ENCODE measurements at regions of chr17 and their contacts with region 1.

Region 1: DNA sequence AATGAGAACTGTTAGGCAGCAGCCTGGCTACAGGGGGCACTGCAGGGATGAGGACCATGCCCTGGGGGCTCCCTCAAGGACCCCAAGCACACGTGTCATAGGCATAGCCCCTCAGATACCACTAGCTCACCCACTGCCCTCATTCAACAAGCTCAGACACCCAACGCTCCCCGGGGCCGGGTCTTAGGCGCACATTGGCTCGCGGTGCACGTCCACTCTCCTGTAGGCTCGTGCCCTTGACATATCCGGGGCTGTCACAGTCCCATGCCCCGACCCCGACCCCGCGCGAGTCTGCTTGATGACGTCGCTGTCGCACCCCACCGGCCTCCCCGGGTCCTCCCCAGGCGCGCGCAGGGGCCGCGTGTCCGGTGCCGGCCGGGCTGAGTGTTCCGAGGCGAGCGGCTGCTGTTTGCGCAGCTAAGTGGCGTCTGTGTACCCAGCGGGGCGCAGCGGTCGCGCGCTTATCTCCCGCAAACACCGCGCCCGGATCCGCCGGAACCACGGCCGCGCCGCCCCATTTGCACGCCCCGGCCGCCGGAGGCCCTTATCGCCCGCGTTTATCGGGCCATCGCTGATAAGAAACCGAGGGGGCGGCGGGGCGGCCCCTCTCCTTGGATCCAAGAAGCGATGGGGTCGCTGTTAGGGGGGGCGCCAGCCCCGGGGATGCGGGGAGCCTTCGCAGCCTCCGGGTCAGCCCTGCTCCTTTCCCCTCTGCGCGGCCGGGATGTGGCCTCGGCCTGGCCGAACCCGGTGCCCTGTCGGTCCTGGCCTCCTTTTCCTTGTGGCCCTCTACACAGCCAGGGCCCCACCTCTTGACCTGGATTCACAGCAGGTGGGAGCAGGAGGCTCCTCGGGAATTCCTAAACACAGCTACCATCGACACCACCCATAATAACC is 20.7 kb upstream of the NAGS start:
- DNase-seq: peak in 1 of 2 experiments; percentile 34
- ATAC-seq: peak; percentile 67 to 77
- H3K4me3 ChIP-seq: peak overlapping the region; percentile 59
- H3K27ac ChIP-seq: peak overlapping the region; percentile 58 to 81; a peak in 5 of 6 replicates
- H3K4me1 ChIP-seq: 0 out of 3 replicates have a peak, but pooled peaks cover 8% of the 10 kb centered on the region
- CTCF ChIP-seq: peak; percentile 53
- EP300 ChIP-seq: no peak
- POLR2A ChIP-seq: no peak
- RAD21 ChIP-seq: no peak

Region 2: DNA sequence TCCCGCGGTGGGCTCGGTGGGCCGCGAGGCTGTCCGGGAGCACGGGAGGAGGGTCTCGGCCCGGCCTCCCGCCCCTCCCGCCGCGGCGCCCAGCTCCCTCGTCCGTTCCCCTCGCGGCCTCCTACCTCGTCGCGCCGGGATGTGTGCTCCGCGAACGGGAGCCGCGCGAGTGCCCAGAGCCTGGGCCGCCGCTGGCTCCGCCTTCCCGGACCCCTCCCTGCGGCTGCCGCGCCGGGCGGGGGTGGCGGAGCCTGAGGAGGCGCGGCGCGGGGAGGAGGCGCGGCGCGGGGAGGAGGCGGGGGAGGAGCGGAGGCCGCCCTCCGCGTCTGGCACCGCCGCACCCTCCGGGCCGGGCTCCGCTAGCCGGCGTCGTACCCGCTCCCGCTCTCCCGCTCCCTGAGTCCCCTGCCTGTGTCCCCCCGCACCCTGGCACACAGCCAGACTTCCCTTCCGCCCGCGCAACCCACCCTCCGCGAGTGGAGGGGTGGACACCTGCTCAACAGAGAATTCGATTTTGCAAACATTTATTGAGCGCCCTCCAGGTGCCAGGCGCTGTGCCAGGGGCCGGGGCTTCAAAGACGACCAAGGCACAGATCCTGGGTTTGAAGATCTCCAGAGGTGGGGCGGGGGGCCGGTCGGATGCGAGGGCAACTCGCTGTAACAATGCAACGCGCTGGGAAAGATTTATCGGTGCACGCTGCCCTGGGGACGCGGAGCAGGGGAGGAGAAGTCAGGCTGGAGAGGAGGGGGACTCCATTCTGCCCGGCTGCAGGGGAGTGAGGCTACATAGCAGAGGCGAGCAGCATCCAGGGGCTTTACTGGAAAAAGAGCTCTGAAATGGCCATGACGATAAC is 150.6 kb before region 1 on chr17 and contains the start of gene MPP3:
- CTCF ChIA-PET with region 1: no interaction called
- POLR2A ChIA-PET with region 1: no interaction called
- DNase-seq: peak; percentile 78 to 94
- ATAC-seq: peak; percentile 84 to 91
- H3K4me3 ChIP-seq: peak within 1 kb of the TSS; percentile 80
- H3K27ac ChIP-seq: peak within 1 kb of the TSS; percentile 91 to 98
- H3K4me1 ChIP-seq: peaks cover 24% of the 10 kb centered on the region
- CTCF ChIP-seq: no peak
- EP300 ChIP-seq: no peak
- POLR2A ChIP-seq: peak; percentile 72
- RAD21 ChIP-seq: no peak
- polyA plus RNA-seq, gene MPP3: 15.5 and 20.3 TPM in 2 replicates

Region 3: GRCh38 chr17:43857942-43858600 is 125.7 kb before region 1 on chr17:
- CTCF ChIA-PET with region 1: no interaction called
- POLR2A ChIA-PET with region 1: no interaction called
- DNase-seq: no peak
- ATAC-seq: no peak
- H3K4me3 ChIP-seq: no peak overlapping the region
- H3K27ac ChIP-seq: no peak overlapping the region
- H3K4me1 ChIP-seq: peaks cover 5% of the 10 kb centered on the region; the same call in 1 of the 3 replicates
- CTCF ChIP-seq: no peak
- EP300 ChIP-seq: no peak
- POLR2A ChIP-seq: no peak
- RAD21 ChIP-seq: no peak

Region 4: DNA sequence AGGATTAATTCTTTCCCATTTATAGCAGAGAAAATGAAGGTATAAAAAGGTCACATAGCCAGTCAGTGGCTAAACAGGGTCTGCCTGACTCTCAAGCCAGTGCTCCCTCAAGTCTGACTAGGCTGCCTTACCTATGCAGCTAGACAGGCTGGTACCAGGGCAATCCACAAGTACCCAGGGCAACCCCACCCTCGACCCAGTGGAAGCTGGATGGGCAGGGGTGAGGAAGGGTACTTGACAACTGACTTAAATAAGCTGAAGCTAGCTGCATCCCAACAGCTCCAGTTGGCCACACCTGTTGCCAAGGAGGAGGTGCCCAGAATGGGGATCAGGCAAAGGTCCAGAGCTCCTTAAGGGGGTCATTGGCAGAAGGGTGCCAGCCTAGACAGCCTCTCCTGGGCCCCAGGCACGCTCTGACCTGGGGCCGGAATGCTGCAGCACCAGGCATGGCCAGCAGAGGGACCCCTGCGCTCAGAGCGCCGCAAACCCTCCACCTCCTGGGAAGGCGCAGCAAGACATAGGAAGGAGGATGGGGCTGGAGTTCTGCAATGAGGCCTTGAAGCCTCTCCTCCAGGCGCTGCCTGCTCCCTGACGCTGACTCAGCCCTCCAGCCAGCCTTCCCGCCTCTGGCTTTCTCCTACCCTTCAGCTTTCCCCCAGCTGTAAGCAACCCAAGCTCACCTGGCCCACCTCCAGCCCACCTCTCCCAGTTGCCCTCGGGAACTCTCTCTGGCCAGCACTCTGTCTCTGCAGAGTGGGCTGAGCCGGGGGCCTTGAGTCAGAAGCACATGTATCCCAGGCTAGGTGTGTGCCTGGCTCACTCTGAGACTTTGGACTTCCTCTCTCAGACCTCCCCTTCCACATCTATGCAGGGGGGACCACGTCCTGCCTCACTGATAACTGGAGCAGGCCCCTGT is 105.2 kb before region 1 on chr17:
- CTCF ChIA-PET with region 1: interaction called, 240 read pairs
- POLR2A ChIA-PET with region 1: no interaction called
- DNase-seq: peak; percentile 87 to 98
- ATAC-seq: peak; percentile 83 to 94
- H3K4me3 ChIP-seq: no peak overlapping the region
- H3K27ac ChIP-seq: peak overlapping the region; percentile 33 to 54; a peak in 4 of 6 replicates
- H3K4me1 ChIP-seq: peaks cover 5% of the 10 kb centered on the region
- CTCF ChIP-seq: peak; percentile 96
- EP300 ChIP-seq: no peak
- POLR2A ChIP-seq: no peak
- RAD21 ChIP-seq: peak; percentile 85 to 88

Region 5: DNA sequence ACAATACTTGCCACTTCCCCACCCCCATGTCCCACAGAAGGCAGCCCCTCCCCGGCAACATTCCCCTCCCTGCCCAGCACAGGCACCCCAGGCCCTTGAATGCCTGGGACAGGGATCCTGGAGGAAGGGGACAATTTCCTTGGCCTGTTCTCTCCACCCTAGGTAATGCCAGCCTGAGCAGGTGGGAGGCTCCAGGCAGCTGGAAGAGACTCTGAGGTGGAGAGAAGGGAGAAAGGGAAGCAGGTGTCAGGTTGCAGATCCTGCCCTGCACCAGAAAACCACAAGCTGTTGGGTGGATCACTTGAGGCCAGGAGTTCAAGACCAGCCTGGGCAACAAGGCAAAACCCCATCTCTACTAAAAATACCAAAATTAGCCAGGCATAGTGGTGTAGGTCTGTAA is 85.3 kb before region 1 on chr17:
- CTCF ChIA-PET with region 1: no interaction called
- POLR2A ChIA-PET with region 1: no interaction called
- DNase-seq: no peak
- ATAC-seq: no peak
- H3K4me3 ChIP-seq: no peak overlapping the region
- H3K27ac ChIP-seq: no peak overlapping the region
- H3K4me1 ChIP-seq: peaks cover 14% of the 10 kb centered on the region
- CTCF ChIP-seq: no peak
- EP300 ChIP-seq: no peak
- POLR2A ChIP-seq: no peak
- RAD21 ChIP-seq: no peak

Region 6: GRCh38 chr17:43946069-43946696 is 37.6 kb before region 1 on chr17:
- CTCF ChIA-PET with region 1: interaction called, 657 read pairs
- POLR2A ChIA-PET with region 1: no interaction called
- DNase-seq: peak in 1 of 2 experiments; percentile 35
- ATAC-seq: no peak
- H3K4me3 ChIP-seq: no peak overlapping the region
- H3K27ac ChIP-seq: no peak overlapping the region
- H3K4me1 ChIP-seq: no peaks in the 10 kb centered on the region
- CTCF ChIP-seq: no peak
- EP300 ChIP-seq: no peak
- POLR2A ChIP-seq: no peak
- RAD21 ChIP-seq: no peak

Region 7: GRCh38 chr17:43958953-43959352 is 24.8 kb before region 1 on chr17:
- CTCF ChIA-PET with region 1: interaction called, 657 read pairs
- POLR2A ChIA-PET with region 1: interaction called, 4 read pairs
- DNase-seq: no peak
- ATAC-seq: no peak
- H3K4me3 ChIP-seq: no peak overlapping the region
- H3K27ac ChIP-seq: no peak overlapping the region
- H3K4me1 ChIP-seq: no peaks in the 10 kb centered on the region
- CTCF ChIP-seq: no peak
- EP300 ChIP-seq: no peak
- POLR2A ChIP-seq: no peak
- RAD21 ChIP-seq: no peak

Region 8: GRCh38 chr17:44044067-44044466 is 60.3 kb after region 1 on chr17:
- CTCF ChIA-PET with region 1: interaction called, 14 read pairs
- POLR2A ChIA-PET with region 1: no interaction called
- DNase-seq: no peak
- ATAC-seq: no peak
- H3K4me3 ChIP-seq: no peak overlapping the region
- H3K27ac ChIP-seq: 0 out of 6 replicates have a peak overlapping the region, but pooled peaks of 1 of the 2 experiments have one; percentile 0
- H3K4me1 ChIP-seq: peaks cover 11% of the 10 kb centered on the region
- CTCF ChIP-seq: no peak
- EP300 ChIP-seq: no peak
- POLR2A ChIP-seq: no peak
- RAD21 ChIP-seq: no peak

Region 9: DNA sequence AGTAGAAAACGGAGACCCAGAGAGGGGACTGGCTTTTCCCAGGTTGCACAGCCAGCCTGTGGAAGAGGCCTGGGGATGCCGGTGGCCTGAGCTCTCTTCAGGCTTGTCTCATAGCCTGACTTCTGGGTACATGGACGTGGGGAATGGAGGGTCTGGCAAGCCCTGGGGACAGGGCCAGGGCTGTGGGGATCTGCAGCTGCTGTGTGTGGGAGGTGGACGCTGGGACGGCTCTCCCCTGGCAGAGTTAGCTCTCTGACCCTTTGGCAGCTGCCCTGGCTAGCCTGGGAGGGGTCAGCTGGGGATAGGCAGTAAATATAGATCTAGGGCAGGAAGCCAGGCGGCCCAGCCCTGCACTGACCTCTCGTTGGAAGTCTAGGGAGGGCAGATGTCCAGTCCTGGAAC is 263.7 kb after region 1 on chr17:
- CTCF ChIA-PET with region 1: no interaction called
- POLR2A ChIA-PET with region 1: no interaction called
- DNase-seq: no peak
- ATAC-seq: peak; percentile 20 to 27; a peak in 4 of 6 replicates
- H3K4me3 ChIP-seq: no peak overlapping the region
- H3K27ac ChIP-seq: no peak overlapping the region
- H3K4me1 ChIP-seq: no peaks in the 10 kb centered on the region
- CTCF ChIP-seq: no peak
- EP300 ChIP-seq: no peak
- POLR2A ChIP-seq: no peak
- RAD21 ChIP-seq: no peak